Right ventricle myocardium inferior (tissue), 1 donor: ENCODE measurements at regions of chr12 and their contacts with region 1.

Region 1: DNA sequence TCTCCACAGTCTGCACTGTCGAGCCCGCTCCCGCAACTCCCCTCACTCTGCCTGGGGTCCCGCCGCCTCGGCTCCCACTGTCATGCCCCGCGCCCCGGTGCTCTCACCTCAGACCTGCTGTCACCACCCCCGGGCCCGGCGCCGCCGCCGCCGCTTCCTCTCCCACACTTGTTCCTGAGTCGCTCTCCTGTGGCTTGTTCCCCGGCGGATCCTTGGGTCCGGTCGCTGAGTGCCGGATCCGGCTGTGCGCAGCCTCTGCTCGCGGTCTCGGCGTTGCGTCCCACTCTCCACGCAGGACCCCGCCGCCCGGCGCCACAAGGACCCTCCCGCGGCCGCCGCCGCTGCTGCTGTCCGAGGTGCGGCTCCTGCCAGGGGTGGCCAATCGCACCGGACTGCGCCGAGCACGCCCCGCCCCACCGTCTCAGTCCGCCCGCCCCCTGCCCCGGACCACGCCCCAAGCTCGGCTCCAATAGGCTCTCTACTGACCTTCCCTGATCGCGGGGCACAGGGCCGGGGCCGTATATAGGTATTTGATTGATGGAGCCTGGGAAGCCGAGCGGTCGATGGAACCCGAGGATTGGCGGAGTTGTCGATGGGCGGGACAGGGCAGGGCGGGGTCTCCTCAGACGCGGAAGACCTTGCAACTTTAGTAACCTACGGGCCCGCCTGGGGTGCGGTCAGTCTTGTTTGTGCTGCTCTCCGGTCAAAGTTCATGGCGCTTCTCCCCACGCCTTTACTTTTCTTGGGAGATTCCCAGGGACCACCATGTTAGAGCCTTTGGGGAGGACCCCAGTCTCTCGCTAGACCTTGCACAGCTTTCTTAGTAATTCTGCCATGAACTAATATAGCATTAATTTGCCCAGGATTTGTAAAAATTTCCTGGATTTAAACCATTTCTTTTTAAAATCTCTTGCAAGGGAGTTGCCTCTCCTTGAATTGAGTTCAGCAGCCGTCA is at the start of gene TAOK3:
- DNase-seq: peak; percentile 100
- ATAC-seq: peak; percentile 97
- total RNA-seq, gene TAOK3: 20.3 TPM

Region 2: GRCh38 chr12:118016424-118017264 is 356.2 kb before region 1 on chr12 and contains the start of gene RFC5:
- intact Hi-C with region 1: loop called (anchors 10 kb)
- DNase-seq: peak; percentile 99
- ATAC-seq: peak; percentile 99
- total RNA-seq, gene RFC5: 4.4 TPM

Region 3: GRCh38 chr12:118061011-118061875 is 311.6 kb before region 1 on chr12 and contains the start of gene WSB2:
- intact Hi-C with region 1: loop called (anchors 2 kb)
- DNase-seq: peak; percentile 90
- ATAC-seq: peak; percentile 65
- total RNA-seq, gene WSB2: 97.3 TPM

Region 4: DNA sequence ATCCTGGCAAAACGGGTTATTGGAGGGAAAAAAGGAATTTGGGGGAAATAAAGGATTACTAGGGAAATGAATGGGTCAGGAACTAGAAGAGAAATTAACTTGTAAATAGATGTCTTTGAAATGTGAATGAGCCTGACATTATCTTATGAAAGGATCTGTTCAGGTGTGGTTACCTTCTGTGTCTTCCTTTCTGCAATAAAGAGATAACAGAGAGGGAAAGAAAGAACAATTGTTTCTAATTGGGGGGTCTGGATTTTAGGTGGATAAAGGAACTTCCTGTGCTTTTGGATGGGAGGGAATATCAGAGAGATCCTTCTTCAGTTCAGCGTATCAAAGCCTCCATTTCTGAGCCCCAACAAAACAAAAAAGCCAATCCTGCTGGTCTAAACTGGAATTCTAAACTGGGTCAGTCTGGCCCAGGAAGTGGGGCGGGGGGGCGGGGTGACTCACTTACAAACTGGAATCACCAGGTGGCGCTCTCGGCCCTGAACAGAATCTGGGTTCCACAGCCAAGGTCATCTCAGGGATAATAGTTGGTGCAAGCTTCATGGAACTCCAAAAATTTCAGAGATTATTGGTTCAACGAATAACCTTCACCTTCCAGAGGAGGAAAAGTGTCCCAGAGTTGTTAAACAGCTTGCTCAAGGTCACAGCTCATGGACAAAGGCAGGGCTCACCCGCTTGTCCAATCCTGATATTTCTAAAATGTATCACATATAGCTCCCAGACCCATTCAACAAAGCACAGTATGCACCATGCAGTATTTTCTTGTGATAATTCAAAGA is 252.0 kb before region 1 on chr12:
- intact Hi-C with region 1: loop called (anchors 1 kb)
- DNase-seq: peak; percentile 84
- ATAC-seq: peak; percentile 84

Region 5: GRCh38 chr12:118135788-118136558 is 236.8 kb before region 1 on chr12 and contains the start of gene PEBP1:
- intact Hi-C with region 1: loop called (anchors 5 kb)
- DNase-seq: peak; percentile 98
- ATAC-seq: peak; percentile 99
- total RNA-seq, gene PEBP1: 459 TPM

Region 6: DNA sequence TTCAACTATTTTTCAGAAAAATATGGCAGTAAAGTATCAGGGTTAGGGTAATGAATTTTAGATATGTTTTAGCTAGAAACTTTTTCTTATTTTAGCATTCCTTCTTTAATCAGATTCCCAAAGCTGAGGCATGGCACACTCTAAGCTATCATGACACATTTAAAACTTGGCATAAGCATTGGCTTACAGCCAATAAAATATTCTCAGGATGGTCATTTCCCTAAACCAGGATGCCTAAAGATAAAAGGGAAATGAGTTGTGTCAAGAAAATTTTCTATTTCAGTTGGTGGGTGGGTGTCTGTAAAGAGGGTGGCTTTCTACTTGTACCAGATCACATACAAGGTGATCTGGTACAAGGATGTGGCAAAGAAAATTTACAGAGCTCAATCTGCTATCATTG is 189.1 kb before region 1 on chr12:
- intact Hi-C with region 1: loop called (anchors 2 kb)
- DNase-seq: no peak
- ATAC-seq: no peak